Activated B cell treated with CpG ODN at 0.5 μM for 24 hours (primary cell): ENCODE measurements at regions of chr18 and their contacts with region 1.

Region 1: GRCh38 chr18:45384137-45384961 is 230.9 kb upstream of the SLC14A2 start:
- DNase-seq: peak; percentile 27
- ATAC-seq: peak; percentile 62
- H3K4me3 Mint-ChIP-seq: no peak overlapping the region
- H3K27ac Mint-ChIP-seq: no peak overlapping the region
- H3K4me1 Mint-ChIP-seq: no peaks in the 10 kb centered on the region
- H3K27me3 Mint-ChIP-seq: peaks cover 12% of the 10 kb centered on the region
- CTCF ChIP-seq: no peak

Region 2: DNA sequence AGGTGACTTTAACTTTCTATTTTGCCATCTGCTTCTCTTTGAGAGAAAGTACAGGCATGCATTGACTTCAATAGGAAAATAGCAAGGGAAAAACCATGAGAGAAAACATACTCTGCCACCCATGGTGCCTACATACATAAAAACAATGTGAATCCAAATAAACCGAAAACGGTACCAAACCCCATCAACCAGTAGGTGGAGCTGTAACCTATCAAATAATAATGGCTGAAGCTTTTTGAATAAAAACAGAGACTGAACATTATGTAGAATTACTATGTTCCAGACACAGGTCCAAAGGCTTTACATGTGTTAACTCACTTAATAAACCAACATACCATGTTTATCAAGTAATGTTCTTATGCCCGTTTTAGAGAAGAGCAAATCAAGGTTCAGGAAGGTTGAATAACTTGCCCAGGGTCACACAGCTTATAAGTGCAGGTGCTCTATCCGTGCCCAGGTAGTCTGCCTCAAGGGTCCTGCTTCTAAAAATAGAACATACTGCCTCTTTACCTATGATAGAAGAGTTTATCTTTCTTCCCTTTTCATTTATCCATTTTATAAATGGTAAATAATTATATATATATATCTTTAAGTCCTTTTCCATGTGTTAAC is 1813.2 kb before region 1 on chr18:
- CTCF ChIA-PET with region 1: interaction called, 15 read pairs
- POLR2A ChIA-PET with region 1: no interaction called
- intact Hi-C with region 1: loop called (anchors 1 kb)
- DNase-seq: no peak
- ATAC-seq: no peak
- H3K4me3 Mint-ChIP-seq: no peak overlapping the region
- H3K27ac Mint-ChIP-seq: no peak overlapping the region
- H3K4me1 Mint-ChIP-seq: no peaks in the 10 kb centered on the region
- H3K27me3 Mint-ChIP-seq: peaks cover 1% of the 10 kb centered on the region
- CTCF ChIP-seq: no peak

Region 3: DNA sequence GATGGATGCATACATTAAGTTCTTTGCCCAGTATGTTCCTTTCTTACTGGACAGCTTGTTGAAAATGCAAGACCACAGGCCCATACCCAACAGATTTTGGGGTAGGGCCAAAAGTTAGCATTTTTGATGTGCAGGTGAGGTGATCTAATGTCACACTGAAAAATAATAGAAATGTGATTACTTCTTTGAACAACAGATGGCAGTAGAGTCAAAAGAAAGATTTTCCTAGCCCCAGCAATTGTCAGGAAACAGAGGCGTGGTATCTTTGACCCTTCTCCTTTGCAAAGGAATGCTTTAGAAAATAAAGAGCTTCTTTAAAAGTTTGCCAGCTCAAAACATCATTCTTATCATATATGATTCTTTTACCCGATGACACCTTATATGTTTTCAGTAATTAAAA is 1763.4 kb before region 1 on chr18:
- CTCF ChIA-PET with region 1: interaction called, 92 read pairs
- POLR2A ChIA-PET with region 1: no interaction called
- intact Hi-C with region 1: loop called (anchors 1 kb)
- DNase-seq: no peak
- ATAC-seq: no peak
- H3K4me3 Mint-ChIP-seq: no peak overlapping the region
- H3K27ac Mint-ChIP-seq: no peak overlapping the region
- H3K4me1 Mint-ChIP-seq: no peaks in the 10 kb centered on the region
- H3K27me3 Mint-ChIP-seq: peaks cover 5% of the 10 kb centered on the region
- CTCF ChIP-seq: no peak

Region 4: DNA sequence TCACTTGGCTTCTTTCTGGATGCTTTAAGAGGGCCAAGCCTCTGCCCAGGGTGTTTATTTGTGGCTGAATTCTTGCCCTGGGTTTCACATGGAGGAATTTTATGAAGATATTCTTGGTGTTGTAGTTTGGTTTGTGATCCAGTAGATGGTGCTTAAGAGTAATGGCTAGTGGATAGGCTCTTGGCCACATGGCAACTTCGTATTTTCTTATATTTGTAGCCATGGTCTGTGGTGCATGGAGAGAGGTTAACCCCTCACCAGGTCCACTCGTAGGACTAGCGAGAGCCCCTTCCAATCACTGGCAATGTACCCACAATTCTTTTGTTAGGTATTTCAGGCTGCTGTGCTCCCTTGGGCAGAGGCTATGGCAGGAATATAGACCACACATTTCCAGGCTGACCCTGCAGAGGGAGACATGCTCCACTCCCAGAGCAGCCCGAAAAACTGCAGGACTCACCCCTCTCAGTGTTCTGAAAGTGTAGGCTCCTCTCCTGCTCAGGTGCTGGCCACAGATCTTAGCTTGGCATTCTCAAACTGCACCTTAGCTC is 1285.7 kb before region 1 on chr18:
- CTCF ChIA-PET with region 1: interaction called, 4 read pairs
- POLR2A ChIA-PET with region 1: no interaction called
- intact Hi-C with region 1: loop called (anchors 1 kb)
- DNase-seq: no peak
- ATAC-seq: peak; percentile 40
- H3K4me3 Mint-ChIP-seq: no peak overlapping the region
- H3K27ac Mint-ChIP-seq: no peak overlapping the region
- H3K4me1 Mint-ChIP-seq: no peaks in the 10 kb centered on the region
- H3K27me3 Mint-ChIP-seq: peaks cover 14% of the 10 kb centered on the region
- CTCF ChIP-seq: no peak

Region 5: DNA sequence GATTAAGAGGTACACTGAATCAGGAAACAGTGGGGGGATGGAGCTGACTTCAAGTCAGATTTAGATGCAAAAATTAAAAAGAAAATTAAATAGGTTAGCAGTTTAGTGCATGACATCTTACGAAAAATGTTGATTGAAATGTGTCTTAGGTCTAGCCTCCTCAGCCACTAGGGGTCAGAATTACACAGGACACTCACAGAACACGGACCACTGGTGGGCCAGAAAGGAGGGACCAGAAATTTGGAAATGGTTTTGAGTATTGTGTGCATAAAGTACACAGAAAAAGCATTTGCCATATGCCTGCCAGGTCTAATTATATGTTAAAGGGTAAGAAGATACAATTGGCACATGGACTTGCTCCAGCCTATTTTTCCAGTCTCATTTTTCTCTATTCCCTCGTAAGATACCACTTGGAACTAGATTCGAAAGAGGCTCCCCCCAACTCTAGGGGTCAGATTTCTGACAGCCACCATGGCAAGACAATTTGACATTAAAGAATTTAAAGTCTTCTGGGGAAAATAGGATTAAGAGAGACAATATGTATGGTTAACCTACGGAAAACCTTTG is 1253.9 kb before region 1 on chr18:
- CTCF ChIA-PET with region 1: interaction called, 30 read pairs
- POLR2A ChIA-PET with region 1: no interaction called
- intact Hi-C with region 1: loop called (anchors 1 kb)
- DNase-seq: no peak
- ATAC-seq: no peak
- H3K4me3 Mint-ChIP-seq: no peak overlapping the region
- H3K27ac Mint-ChIP-seq: no peak overlapping the region
- H3K4me1 Mint-ChIP-seq: peaks cover 8% of the 10 kb centered on the region
- H3K27me3 Mint-ChIP-seq: peaks cover 7% of the 10 kb centered on the region
- CTCF ChIP-seq: peak; percentile 24

Region 6: GRCh38 chr18:44579028-44579702 is 805.2 kb before region 1 on chr18:
- CTCF ChIA-PET with region 1: no interaction called
- POLR2A ChIA-PET with region 1: no interaction called
- intact Hi-C with region 1: loop called (anchors 1 kb)
- DNase-seq: no peak
- ATAC-seq: no peak
- H3K4me3 Mint-ChIP-seq: no peak overlapping the region
- H3K27ac Mint-ChIP-seq: no peak overlapping the region
- H3K4me1 Mint-ChIP-seq: peaks cover 20% of the 10 kb centered on the region
- H3K27me3 Mint-ChIP-seq: no peaks in the 10 kb centered on the region
- CTCF ChIP-seq: peak; percentile 39

Region 7: DNA sequence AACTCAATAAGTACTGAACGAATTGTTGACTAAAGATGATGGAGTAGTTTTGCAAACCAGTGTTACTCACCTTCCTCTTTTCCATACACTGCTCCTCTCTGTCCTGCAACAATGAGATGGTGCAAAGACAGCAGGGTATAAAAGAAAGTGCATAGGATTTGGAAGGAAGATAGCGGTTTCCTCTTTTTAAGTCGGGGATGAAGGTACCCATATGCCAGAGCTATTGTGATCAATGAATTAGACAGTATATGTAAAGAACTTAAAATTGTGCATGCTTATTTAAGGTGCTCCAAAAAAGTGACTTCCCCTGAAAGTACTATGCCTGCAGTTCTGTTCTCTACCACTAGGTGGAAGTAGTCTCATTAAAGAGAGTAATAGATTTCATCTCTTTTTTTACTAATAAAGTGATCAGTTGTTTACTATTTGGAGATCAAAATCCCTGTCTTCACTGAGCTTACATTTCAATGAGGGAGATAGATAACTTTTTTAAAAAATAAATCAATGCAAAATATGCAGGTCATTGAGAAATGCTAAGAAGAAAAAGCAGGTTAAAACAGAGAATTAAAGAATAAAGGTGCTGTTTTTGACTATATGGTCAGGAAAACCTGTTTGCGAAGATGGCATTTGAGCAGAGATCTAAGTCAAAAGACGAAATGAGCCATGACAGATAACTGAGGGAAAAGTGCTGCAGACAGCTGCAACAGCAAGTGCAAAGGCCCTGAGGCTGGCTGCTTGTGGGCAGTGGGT is 108.8 kb before region 1 on chr18:
- CTCF ChIA-PET with region 1: interaction called, 3 read pairs
- POLR2A ChIA-PET with region 1: no interaction called
- intact Hi-C with region 1: loop called (anchors 2 kb)
- DNase-seq: no peak
- ATAC-seq: no peak
- H3K4me3 Mint-ChIP-seq: no peak overlapping the region
- H3K27ac Mint-ChIP-seq: no peak overlapping the region
- H3K4me1 Mint-ChIP-seq: no peaks in the 10 kb centered on the region
- H3K27me3 Mint-ChIP-seq: no peaks in the 10 kb centered on the region
- CTCF ChIP-seq: no peak